Breast epithelium (tissue), 4 donors: ENCODE measurements at regions of chr9 and their contacts with region 1.

Region 1: GRCh38 chr9:69199769-69200470 is 25.8 kb downstream of the TJP2 start:
- DNase-seq: no peak
- H3K4me3 ChIP-seq: no peak overlapping the region
- H3K27ac ChIP-seq: no peak overlapping the region
- H3K4me1 ChIP-seq: no peaks in the 10 kb centered on the region
- H3K27me3 ChIP-seq: no peaks in the 10 kb centered on the region
- CTCF ChIP-seq: no peak
- POLR2A ChIP-seq: no peak

Region 2: GRCh38 chr9:69056191-69056815 is 143.6 kb before region 1 on chr9:
- intact Hi-C with region 1: loop called (anchors 10 kb)
- DNase-seq: no peak
- H3K4me3 ChIP-seq: no peak overlapping the region
- H3K27ac ChIP-seq: no peak overlapping the region
- H3K4me1 ChIP-seq: no peaks in the 10 kb centered on the region
- H3K27me3 ChIP-seq: no peaks in the 10 kb centered on the region
- CTCF ChIP-seq: no peak
- POLR2A ChIP-seq: no peak